ENCODE measurements at regions of chr10 and their contacts with region 1.

Region 1: GRCh38 chr10:110567201-110568054 is at the start of gene SMC3:
- DNase-seq: peak; percentile 95
- H3K4me3 Mint-ChIP-seq: peak within 1 kb of the TSS; percentile 87
- H3K27ac Mint-ChIP-seq: peak within 1 kb of the TSS; percentile 98
- H3K4me1 Mint-ChIP-seq: peaks cover 31% of the 10 kb centered on the region
- H3K27me3 Mint-ChIP-seq: peaks cover 5% of the 10 kb centered on the region
- total RNA-seq, gene SMC3: 81.3 to 85.0 TPM

Region 2: GRCh38 chr10:110363572-110364411 is 203.6 kb before region 1 on chr10:
- CTCF ChIA-PET with region 1: no interaction called
- intact Hi-C with region 1: no loop called
- DNase-seq: peak; percentile 34
- H3K4me3 Mint-ChIP-seq: peak overlapping the region; percentile 23
- H3K27ac Mint-ChIP-seq: peak overlapping the region; percentile 93
- H3K4me1 Mint-ChIP-seq: peaks cover 80% of the 10 kb centered on the region
- H3K27me3 Mint-ChIP-seq: no peaks in the 10 kb centered on the region

Region 3: DNA sequence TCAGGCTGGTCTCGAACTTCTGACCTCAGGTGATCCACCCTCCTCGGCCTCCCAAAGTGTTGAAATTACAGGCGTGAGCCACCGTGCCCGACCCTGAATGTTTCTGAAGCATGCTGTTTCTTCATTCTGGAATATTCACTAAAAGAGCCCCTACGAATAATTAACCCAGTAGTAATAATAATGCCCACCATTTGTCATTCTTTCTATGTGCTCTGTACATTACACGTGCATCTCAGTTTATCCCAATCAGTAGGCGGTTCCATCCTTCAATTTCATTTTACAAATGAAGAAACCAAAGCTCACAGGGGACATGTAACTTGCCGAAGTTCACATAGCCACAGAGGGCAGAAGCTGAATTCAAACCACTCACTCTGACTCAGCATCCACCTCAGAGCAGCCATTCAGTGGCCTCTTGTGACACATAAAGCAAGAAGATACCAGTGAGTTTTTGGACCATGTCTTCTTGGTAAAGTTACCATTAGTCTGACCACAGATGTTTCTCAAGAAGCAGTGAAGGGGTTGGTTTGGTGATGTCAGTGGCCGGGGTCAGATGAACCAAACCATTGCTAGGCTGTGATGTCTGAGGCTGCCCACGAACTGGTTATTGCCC is 141.6 kb before region 1 on chr10:
- CTCF ChIA-PET with region 1: no interaction called
- intact Hi-C with region 1: no loop called
- DNase-seq: peak; percentile 68
- H3K4me3 Mint-ChIP-seq: no peak overlapping the region
- H3K27ac Mint-ChIP-seq: peak overlapping the region; percentile 76
- H3K4me1 Mint-ChIP-seq: peaks cover 30% of the 10 kb centered on the region
- H3K27me3 Mint-ChIP-seq: no peaks in the 10 kb centered on the region

Region 4: GRCh38 chr10:110556969-110557601 is 10.3 kb before region 1 on chr10:
- CTCF ChIA-PET with region 1: interaction called, 3 read pairs
- intact Hi-C with region 1: loop called (anchors 1 kb)
- DNase-seq: peak; percentile 88
- H3K4me3 Mint-ChIP-seq: no peak overlapping the region
- H3K27ac Mint-ChIP-seq: no peak overlapping the region
- H3K4me1 Mint-ChIP-seq: peaks cover 4% of the 10 kb centered on the region
- H3K27me3 Mint-ChIP-seq: peaks cover 5% of the 10 kb centered on the region